MCF 10A (cell line): ENCODE measurements at regions of chr11 and their contacts with region 1.

Region 1: GRCh38 chr11:77547863-77548551 is 41.7 kb upstream of the AQP11 start:
- DNase-seq: peak; percentile 77
- H3K4me3 Mint-ChIP-seq: no peak overlapping the region
- H3K27ac Mint-ChIP-seq: no peak overlapping the region
- H3K4me1 Mint-ChIP-seq: peaks cover 5% of the 10 kb centered on the region
- H3K27me3 Mint-ChIP-seq: no peaks in the 10 kb centered on the region
- CTCF ChIP-seq: peak; percentile 72

Region 2: DNA sequence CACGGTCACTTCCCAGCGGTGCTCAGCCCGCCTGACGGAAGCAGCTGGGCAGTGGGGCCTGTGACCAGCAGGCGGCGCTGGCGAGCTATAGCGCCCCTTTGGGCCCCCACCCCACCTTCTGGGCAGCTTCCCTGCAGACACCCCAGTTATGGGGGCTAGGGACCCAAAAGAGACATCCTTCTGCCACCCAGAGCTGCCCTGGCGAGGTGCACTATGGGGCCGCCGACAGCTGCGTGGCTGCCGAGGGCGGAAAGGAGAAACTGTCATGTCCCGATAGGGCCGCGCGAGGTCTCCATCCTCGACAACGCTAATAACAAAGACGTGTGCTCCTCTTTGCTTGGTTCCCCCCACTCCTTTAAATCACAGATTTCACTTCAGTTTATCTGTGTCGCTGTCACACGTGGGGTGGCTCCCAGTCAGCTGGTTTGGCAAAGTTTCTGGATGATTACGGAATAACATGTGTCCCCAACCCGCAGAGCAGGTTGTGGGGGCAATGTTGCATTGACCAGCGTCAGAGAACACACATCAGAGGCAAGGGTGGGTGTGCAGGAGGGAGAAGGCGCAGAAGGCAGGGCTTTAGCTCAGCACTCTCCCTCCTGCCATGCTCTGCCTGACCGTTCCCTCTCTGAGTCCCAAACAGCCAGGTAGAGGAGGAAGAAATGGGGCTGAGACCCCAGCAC is 420.6 kb before region 1 on chr11:
- CTCF ChIA-PET with region 1: interaction called, 22 read pairs
- POLR2A ChIA-PET with region 1: no interaction called
- intact Hi-C with region 1: loop called (anchors 1 kb)
- DNase-seq: peak; percentile 43
- H3K4me3 Mint-ChIP-seq: peak overlapping the region; percentile 68
- H3K27ac Mint-ChIP-seq: no peak overlapping the region
- H3K4me1 Mint-ChIP-seq: no peaks in the 10 kb centered on the region
- H3K27me3 Mint-ChIP-seq: peaks cover 11% of the 10 kb centered on the region
- CTCF ChIP-seq: peak; percentile 99

Region 3: DNA sequence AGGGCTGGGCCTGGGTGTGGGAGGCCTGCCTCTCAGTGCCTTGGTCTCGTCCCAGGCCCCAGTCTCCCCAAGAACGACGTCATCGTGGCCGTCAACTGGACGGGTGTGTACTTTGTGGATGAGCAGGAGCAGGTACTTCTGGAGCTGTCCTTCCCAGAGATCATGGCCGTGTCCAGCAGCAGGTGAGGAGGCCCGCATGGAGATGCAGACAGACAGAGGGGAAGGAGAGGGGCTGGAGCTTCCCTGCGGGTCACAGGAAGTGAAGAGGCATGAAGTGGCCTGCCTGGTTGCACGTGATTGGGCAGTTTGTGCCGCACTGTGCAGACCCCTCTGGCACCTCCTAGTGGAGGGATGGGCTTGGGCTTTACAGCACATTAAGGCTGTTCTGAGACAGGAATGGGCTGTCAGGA is 349.6 kb before region 1 on chr11:
- CTCF ChIA-PET with region 1: interaction called, 57 read pairs
- POLR2A ChIA-PET with region 1: interaction called, 9 read pairs
- intact Hi-C with region 1: loop called (anchors 1 kb)
- DNase-seq: peak; percentile 12
- H3K4me3 Mint-ChIP-seq: no peak overlapping the region
- H3K27ac Mint-ChIP-seq: no peak overlapping the region
- H3K4me1 Mint-ChIP-seq: no peaks in the 10 kb centered on the region
- H3K27me3 Mint-ChIP-seq: no peaks in the 10 kb centered on the region
- CTCF ChIP-seq: peak; percentile 12

Region 4: GRCh38 chr11:77446911-77447629 is 100.9 kb before region 1 on chr11:
- CTCF ChIA-PET with region 1: interaction called, 10 read pairs
- POLR2A ChIA-PET with region 1: no interaction called
- intact Hi-C with region 1: no loop called
- DNase-seq: no peak
- H3K4me3 Mint-ChIP-seq: no peak overlapping the region
- H3K27ac Mint-ChIP-seq: no peak overlapping the region
- H3K4me1 Mint-ChIP-seq: no peaks in the 10 kb centered on the region
- H3K27me3 Mint-ChIP-seq: no peaks in the 10 kb centered on the region
- CTCF ChIP-seq: no peak

Region 5: DNA sequence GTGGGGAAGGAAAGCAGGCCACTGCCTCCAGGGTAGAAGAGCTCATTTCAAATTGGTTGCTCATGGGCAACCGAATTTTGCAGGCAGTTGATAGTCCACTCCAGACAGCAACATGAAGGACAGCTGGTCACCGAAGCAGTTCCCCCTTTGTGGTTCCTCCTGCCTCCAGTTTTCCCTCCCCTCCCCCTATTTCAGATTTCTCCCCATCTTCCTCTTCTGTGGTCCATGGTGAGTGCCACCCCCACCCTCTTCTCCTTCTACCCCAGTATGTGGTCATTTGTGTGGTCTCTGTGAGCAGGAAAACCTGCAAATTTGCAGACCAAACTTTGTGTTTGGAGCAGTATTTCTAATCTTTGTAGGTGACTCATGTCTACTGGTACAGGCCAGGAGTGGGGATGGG is 35.9 kb before region 1 on chr11:
- CTCF ChIA-PET with region 1: interaction called, 11 read pairs
- POLR2A ChIA-PET with region 1: interaction called, 3 read pairs
- intact Hi-C with region 1: no loop called
- DNase-seq: no peak
- H3K4me3 Mint-ChIP-seq: no peak overlapping the region
- H3K27ac Mint-ChIP-seq: no peak overlapping the region
- H3K4me1 Mint-ChIP-seq: peaks cover 16% of the 10 kb centered on the region
- H3K27me3 Mint-ChIP-seq: no peaks in the 10 kb centered on the region
- CTCF ChIP-seq: no peak

Region 6: DNA sequence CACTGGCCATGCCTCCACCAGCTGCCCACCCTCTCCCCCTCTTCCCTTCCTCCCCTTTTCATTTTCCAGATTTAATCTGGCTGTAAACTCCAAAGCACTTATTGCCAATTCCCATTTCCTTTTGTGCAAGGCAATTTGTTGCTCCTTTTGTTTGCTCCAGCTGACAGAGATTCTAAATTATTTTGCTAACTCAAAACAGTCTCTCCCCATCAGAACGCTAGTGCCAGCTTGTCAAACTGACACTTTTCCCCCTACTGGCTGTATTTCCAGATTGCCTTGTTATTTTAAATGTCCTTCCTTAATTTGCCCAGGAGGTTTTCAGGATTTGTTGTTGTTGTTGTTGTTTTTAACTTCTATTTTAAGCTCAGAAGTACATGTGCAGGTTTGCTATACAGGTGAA is 17.1 kb before region 1 on chr11:
- CTCF ChIA-PET with region 1: interaction called, 12 read pairs
- POLR2A ChIA-PET with region 1: no interaction called
- intact Hi-C with region 1: no loop called
- DNase-seq: no peak
- H3K4me3 Mint-ChIP-seq: no peak overlapping the region
- H3K27ac Mint-ChIP-seq: no peak overlapping the region
- H3K4me1 Mint-ChIP-seq: no peaks in the 10 kb centered on the region
- H3K27me3 Mint-ChIP-seq: no peaks in the 10 kb centered on the region
- CTCF ChIP-seq: no peak

Region 7: DNA sequence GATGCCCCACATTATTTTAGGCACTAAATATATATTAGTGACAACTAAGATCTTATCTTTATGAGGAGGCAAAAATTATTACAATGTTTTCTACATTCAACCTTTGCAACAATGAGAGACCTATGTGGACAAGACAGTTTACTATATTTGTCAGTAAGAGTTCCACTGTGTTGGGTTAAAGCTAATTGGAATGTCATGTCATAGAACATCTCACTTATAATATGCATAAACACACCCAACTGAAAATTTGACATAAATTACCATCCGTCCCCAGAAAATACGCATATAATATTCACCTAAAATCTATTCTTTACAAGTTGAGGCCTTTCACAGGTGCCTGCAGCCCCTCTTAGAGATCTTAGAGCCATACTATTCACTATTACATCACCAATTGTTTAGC is 188.5 kb after region 1 on chr11:
- CTCF ChIA-PET with region 1: no interaction called
- POLR2A ChIA-PET with region 1: no interaction called
- intact Hi-C with region 1: no loop called
- DNase-seq: no peak
- H3K4me3 Mint-ChIP-seq: no peak overlapping the region
- H3K27ac Mint-ChIP-seq: no peak overlapping the region
- H3K4me1 Mint-ChIP-seq: no peaks in the 10 kb centered on the region
- H3K27me3 Mint-ChIP-seq: no peaks in the 10 kb centered on the region
- CTCF ChIP-seq: no peak